RWPE1 (cell line): ENCODE measurements at regions of chr7 and their contacts with region 1.

Region 1: GRCh38 chr7:44065436-44066118 is at the start of gene PGAM2:
- DNase-seq: no peak
- H3K27ac ChIP-seq: peak within 1 kb of the TSS; percentile 49
- CTCF ChIP-seq: no peak

Region 2: GRCh38 chr7:44081266-44081748 is 15.7 kb after region 1 on chr7:
- CTCF ChIA-PET with region 1: no interaction called
- POLR2A ChIA-PET with region 1: interaction called, 12 read pairs
- DNase-seq: no peak
- H3K27ac ChIP-seq: peak overlapping the region; percentile 94
- CTCF ChIP-seq: no peak